ENCODE measurements at regions of chr4 and their contacts with region 1.

Region 1: DNA sequence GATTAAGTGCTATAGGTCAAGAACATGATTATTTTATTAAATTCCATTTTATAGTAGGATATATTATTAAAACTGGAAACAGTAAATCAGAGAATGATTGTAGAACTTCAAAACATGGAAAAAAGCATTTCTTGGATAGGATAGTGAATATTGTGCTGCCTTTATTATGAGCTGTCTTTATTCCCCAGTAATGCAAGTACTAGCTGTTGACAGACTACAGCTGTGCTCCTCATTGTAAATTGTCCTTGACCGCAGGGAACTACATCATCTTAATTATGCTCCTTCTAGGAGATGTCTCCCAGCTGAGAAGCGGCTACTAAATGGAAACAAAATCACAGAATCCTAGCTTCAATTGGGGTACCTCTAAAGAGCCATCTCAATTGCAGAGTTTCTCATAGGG is 1457.2 kb upstream of the PCDH7 start:
- DNase-seq: no peak
- H3K4me3 ChIP-seq: no peak overlapping the region
- H3K27ac ChIP-seq: no peak overlapping the region
- H3K4me1 ChIP-seq: no peaks in the 10 kb centered on the region
- H3K27me3 ChIP-seq: no peaks in the 10 kb centered on the region
- CTCF ChIP-seq: no peak
- POLR2A ChIP-seq: no peak

Region 2: GRCh38 chr4:27278615-27279375 is 1984.2 kb before region 1 on chr4:
- intact Hi-C with region 1: loop called (anchors 5 kb)
- DNase-seq: no peak
- H3K4me3 ChIP-seq: no peak overlapping the region
- H3K27ac ChIP-seq: no peak overlapping the region
- H3K4me1 ChIP-seq: no peaks in the 10 kb centered on the region
- H3K27me3 ChIP-seq: no peaks in the 10 kb centered on the region
- CTCF ChIP-seq: no peak
- POLR2A ChIP-seq: no peak

Measured in breast epithelium (tissue), 4 donors.